ENCODE measurements at regions of chr10 and their contacts with region 1.

Region 1: DNA sequence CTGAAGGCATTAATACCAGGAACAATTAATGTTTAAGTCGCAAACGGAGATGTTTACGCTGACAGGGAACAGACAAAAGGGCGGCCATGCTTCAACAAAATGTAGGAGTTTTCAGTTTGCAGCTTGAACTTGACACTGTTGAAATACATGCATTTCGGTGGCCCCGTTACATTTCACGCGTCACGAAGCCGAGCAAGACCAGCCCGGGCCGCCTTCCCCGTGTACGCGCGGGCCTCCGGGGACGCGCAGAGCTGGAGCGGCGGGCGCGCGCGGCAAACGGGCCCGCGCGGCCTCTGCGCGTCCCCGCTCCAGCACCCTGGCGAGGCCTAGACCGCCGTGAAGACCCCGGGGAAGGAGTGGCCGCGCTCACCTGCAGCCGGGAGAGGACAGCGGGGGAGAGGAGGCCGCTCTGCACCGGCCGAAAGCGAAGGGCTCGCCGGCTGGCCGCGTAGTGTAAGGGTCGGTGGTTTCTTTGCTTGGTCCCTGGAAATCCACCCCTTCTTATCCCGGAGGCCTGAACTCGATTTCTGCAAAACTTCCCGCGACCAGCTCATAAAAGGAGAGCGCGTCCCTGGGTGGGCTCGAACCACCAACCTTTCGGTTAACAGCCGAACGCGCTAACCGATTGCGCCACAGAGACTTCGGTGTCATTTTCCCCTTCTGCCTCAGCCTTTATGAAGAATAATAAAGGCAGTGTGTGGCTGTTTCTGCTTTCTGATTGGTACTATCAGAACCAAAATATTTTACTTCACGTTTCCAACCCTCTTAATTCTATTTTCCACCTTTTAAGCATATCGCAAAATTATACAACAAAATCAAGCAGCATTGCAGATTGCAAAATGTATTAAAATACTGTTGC is 11.4 kb upstream of the EBLN1 start:
- DNase-seq: peak; percentile 86
- H3K4me3 ChIP-seq: peak overlapping the region; percentile 77
- H3K27ac ChIP-seq: peak overlapping the region; percentile 34
- H3K4me1 ChIP-seq: peaks cover 6% of the 10 kb centered on the region
- CTCF ChIP-seq: no peak

Region 2: GRCh38 chr10:21516242-21517131 is 712.7 kb before region 1 on chr10:
- CTCF ChIA-PET with region 1: no interaction called
- POLR2A ChIA-PET with region 1: no interaction called
- intact Hi-C with region 1: loop called (anchors 5 kb)
- DNase-seq: peak; percentile 67
- H3K4me3 ChIP-seq: peak overlapping the region; percentile 70
- H3K27ac ChIP-seq: no peak overlapping the region
- H3K4me1 ChIP-seq: peaks cover 27% of the 10 kb centered on the region
- CTCF ChIP-seq: no peak

Region 3: DNA sequence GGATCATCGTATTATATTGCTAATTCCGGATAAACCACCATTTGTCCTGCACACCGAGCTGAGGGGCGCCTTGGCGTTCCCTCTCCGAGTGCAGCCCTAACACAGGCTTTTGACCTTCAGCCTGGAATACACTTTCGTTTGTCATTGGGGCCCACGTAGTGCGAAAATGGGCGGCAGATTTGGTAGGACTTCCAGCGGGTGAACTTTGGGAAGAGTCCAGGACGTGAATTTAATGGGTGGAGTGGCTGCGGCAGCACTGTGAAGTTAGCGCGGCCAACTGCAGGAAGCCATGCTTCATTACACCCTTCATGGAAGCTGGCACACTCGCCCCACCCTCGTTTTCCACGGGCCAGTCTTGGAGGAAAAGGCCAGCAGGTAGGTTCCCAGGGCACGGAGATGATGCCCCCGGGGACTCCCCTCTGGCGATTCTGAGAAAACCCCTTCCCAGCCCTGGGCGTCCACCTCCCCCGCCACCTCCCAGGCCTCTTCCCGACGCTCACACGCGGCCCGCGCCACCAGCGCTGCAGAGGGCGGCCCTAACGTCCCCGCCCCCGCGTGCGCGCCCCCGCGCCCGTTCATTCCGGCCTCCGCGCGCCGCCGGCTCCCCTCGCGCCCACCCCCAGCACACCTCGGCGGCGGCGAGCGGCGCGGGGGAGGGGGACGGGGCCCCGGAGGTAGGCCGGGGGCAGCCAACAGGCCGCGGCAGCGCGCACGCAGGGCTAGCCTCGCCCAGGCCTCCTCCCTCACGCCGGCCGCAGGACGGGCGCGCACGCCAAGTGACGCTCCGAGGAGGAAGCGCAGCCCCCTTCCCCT is 695.5 kb before region 1 on chr10 and contains the start of gene MLLT10:
- CTCF ChIA-PET with region 1: no interaction called
- POLR2A ChIA-PET with region 1: no interaction called
- intact Hi-C with region 1: loop called (anchors 5 kb)
- DNase-seq: peak; percentile 98
- H3K4me3 ChIP-seq: peak within 1 kb of the TSS; percentile 72
- H3K27ac ChIP-seq: peak within 1 kb of the TSS; percentile 70
- H3K4me1 ChIP-seq: peaks cover 24% of the 10 kb centered on the region
- CTCF ChIP-seq: no peak
- total RNA-seq, gene MLLT10: 50.4 and 68.4 TPM in 2 replicates

Region 4: GRCh38 chr10:22003079-22003913 is 225.9 kb before region 1 on chr10 and contains the start of gene DNAJC1:
- CTCF ChIA-PET with region 1: no interaction called
- POLR2A ChIA-PET with region 1: no interaction called
- intact Hi-C with region 1: loop called (anchors 2 kb)
- DNase-seq: peak; percentile 96
- H3K4me3 ChIP-seq: peak within 1 kb of the TSS; percentile 80
- H3K27ac ChIP-seq: peak within 1 kb of the TSS; percentile 40
- H3K4me1 ChIP-seq: peaks cover 26% of the 10 kb centered on the region
- CTCF ChIP-seq: no peak
- total RNA-seq, gene DNAJC1: 12.1 and 16.9 TPM in 2 replicates

Region 5: DNA sequence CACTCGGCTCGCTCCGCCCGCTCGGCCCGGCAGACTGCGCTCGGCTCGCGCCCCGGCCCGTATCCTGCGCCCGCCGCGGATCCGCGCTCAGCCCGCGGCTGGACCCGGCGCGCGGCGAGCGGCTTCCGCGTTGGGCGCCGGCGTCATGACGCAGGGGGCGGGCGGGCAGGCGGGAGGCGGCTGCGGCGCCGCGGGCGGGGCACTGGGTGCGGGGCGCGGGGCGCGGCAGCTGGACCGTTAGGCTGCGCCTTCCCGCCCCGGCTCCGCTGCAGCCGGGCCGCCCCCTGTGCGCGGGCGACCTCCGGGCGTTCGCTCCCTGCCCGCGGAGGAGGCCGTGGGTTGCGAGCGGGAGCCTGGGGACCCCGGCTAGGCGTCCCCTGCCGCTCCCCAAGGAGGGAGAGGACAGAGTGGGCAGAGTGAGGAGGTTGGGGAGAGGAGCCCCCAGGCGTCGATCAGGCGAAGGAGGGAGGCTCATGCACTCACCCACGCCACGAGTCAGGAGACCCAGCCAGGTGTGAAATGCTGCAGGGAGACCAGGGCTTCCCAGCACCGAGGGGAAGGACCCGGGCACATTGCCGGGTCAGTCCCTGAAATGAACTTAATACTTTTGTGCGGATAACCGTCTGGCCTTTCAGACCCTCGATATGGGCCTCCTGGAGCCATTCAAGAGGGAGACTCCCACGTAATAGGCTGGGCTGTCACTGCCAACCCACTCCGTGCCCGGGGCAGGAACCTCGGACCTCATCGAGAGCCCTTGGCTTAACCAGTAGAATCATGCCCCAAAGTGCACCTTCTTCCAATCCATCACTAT is 485.5 kb after region 1 on chr10 and contains the start of gene PIP4K2A:
- CTCF ChIA-PET with region 1: no interaction called
- POLR2A ChIA-PET with region 1: no interaction called
- intact Hi-C with region 1: loop called (anchors 1 kb)
- DNase-seq: peak; percentile 84
- H3K4me3 ChIP-seq: peak within 1 kb of the TSS; percentile 88
- H3K27ac ChIP-seq: peak within 1 kb of the TSS; percentile 41
- H3K4me1 ChIP-seq: peaks cover 28% of the 10 kb centered on the region
- CTCF ChIP-seq: no peak
- total RNA-seq, gene PIP4K2A: 32.5 and 37.9 TPM in 2 replicates